ENCODE measurements at regions of chr19 and their contacts with region 1.

Region 1: GRCh38 chr19:53333463-53334449 is at the start of gene ZNF845:
- DNase-seq: peak; percentile 99
- ATAC-seq: peak; percentile 99
- H3K4me3 Mint-ChIP-seq: peak within 1 kb of the TSS; percentile 95
- H3K27ac Mint-ChIP-seq: peak within 1 kb of the TSS; percentile 91
- H3K4me1 Mint-ChIP-seq: peaks cover 30% of the 10 kb centered on the region
- H3K27me3 Mint-ChIP-seq: peaks cover 4% of the 10 kb centered on the region
- CTCF ChIP-seq: no peak
- total RNA-seq, gene ZNF845: 11.6 and 11.9 TPM in 2 replicates

Region 2: GRCh38 chr19:52296773-52297600 is 1036.8 kb before region 1 on chr19 and contains the start of gene ZNF480:
- CTCF ChIA-PET with region 1: no interaction called
- POLR2A ChIA-PET with region 1: no interaction called
- intact Hi-C with region 1: loop called (anchors 10 kb)
- DNase-seq: peak; percentile 78
- ATAC-seq: peak; percentile 80
- H3K4me3 Mint-ChIP-seq: peak within 1 kb of the TSS; percentile 98
- H3K27ac Mint-ChIP-seq: peak within 1 kb of the TSS; percentile 98
- H3K4me1 Mint-ChIP-seq: peaks cover 21% of the 10 kb centered on the region
- H3K27me3 Mint-ChIP-seq: no peaks in the 10 kb centered on the region
- CTCF ChIP-seq: no peak
- total RNA-seq, gene ZNF480: 24.0 and 25.5 TPM in 2 replicates

Region 3: DNA sequence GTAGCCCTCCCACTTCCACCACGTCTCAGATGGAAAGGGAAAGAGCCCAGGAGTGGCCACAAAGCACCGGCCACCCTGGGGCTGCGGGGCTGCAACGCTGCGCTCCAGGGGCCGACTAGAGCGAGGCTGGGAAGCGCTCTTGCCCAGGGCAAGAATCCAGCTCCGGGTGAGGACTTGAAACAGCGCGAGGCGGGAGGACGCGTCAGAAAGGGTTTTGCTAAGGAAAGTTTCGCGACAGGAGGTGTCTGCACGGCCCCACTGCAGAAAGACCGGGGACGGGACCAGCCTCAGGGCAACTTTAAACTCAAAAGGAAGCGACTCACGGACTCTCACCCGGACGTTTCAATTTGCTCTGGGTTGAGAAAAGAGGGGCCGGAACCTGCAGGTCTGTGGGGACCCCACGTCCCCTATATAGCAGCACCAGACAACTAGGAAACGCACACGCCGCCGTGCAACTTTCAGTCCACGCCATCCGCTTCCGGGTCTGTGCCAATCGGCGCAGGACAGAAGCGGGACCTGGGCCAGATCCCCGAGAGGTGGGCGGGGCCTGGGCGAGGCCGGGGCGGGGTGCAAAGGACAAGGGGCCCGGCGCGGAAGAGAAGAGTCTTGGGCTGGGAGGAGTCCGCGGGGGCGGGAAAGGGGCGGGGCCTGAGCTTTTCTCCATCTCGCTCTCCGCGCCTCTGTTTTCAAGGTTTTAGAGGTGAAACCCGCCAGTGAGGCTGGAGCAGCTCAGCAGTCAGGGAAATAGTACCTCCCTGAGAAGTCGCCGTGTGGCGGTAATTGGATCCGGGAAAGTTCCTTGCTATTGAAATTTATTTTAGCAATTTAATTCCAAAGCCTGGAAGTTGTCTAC is 371.1 kb before region 1 on chr19 and contains the start of gene ZNF816:
- CTCF ChIA-PET with region 1: no interaction called
- POLR2A ChIA-PET with region 1: interaction called, 9 read pairs
- intact Hi-C with region 1: loop called (anchors 1 kb)
- DNase-seq: peak; percentile 97
- ATAC-seq: peak; percentile 99
- H3K4me3 Mint-ChIP-seq: peak within 1 kb of the TSS; percentile 94
- H3K27ac Mint-ChIP-seq: peak within 1 kb of the TSS; percentile 92
- H3K4me1 Mint-ChIP-seq: peaks cover 31% of the 10 kb centered on the region
- H3K27me3 Mint-ChIP-seq: no peaks in the 10 kb centered on the region
- CTCF ChIP-seq: no peak
- total RNA-seq, gene ZNF816: 17.0 and 18.0 TPM in 2 replicates

Region 4: DNA sequence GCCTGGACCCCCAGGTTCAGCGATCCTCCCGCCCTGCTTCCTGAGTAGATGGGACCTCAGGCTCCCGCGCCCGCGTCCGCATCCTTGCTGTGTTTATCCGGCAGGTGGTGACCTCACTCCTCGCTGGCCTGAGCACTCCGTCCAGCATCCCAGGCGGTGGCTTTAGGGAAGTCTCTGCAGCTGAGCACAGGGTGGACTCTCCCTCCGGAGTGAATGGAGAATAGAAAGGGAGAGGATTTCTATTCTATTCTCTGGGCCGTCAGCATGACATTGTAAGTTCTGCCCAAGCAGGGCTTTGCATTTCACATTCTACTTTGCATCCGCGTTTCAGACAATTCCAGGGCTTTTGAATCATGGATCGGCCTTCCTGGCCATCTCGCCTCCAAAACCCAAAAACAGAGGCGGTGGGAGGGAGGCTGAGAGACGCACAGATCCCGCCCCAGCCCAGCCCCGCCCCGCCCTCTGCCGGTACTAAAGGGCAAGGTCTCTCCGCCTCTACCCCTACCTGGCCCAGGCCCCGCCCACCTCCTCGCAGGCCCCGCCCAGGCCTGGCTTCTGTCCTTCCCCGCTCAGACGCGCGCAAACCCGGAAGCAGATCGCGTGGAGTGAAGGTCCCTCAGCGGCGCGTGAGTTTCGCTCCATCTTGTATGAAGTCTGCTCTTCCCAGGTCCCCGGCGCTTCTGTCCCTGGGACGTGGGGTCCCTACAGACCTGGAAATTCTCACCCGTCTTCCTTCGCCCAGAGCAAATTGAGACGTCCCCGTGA is 31.6 kb after region 1 on chr19 and contains the start of gene ZNF525:
- CTCF ChIA-PET with region 1: no interaction called
- POLR2A ChIA-PET with region 1: no interaction called
- intact Hi-C with region 1: loop called (anchors 1 kb)
- DNase-seq: peak; percentile 98
- ATAC-seq: peak; percentile 99
- H3K4me3 Mint-ChIP-seq: peak within 1 kb of the TSS; percentile 96
- H3K27ac Mint-ChIP-seq: peak within 1 kb of the TSS; percentile 98
- H3K4me1 Mint-ChIP-seq: peaks cover 34% of the 10 kb centered on the region
- H3K27me3 Mint-ChIP-seq: no peaks in the 10 kb centered on the region
- CTCF ChIP-seq: no peak
- total RNA-seq, gene ZNF525: 28.9 and 37.4 TPM in 2 replicates

Region 5: GRCh38 chr19:53431399-53432087 is 97.8 kb after region 1 on chr19 and contains the start of gene ZNF761:
- CTCF ChIA-PET with region 1: no interaction called
- POLR2A ChIA-PET with region 1: no interaction called
- intact Hi-C with region 1: loop called (anchors 1 kb)
- DNase-seq: peak; percentile 99
- ATAC-seq: peak; percentile 98
- H3K4me3 Mint-ChIP-seq: peak within 1 kb of the TSS; percentile 96
- H3K27ac Mint-ChIP-seq: peak within 1 kb of the TSS; percentile 94
- H3K4me1 Mint-ChIP-seq: peaks cover 34% of the 10 kb centered on the region
- H3K27me3 Mint-ChIP-seq: no peaks in the 10 kb centered on the region
- CTCF ChIP-seq: no peak
- total RNA-seq, gene ZNF761: 11.1 and 13.8 TPM in 2 replicates

Region 6: GRCh38 chr19:53520550-53521372 is 187.0 kb after region 1 on chr19:
- CTCF ChIA-PET with region 1: no interaction called
- POLR2A ChIA-PET with region 1: interaction called, 3 read pairs
- intact Hi-C with region 1: loop called (anchors 2 kb)
- DNase-seq: peak; percentile 71
- ATAC-seq: peak; percentile 97
- H3K4me3 Mint-ChIP-seq: peak overlapping the region; percentile 94
- H3K27ac Mint-ChIP-seq: peak overlapping the region; percentile 87
- H3K4me1 Mint-ChIP-seq: peaks cover 16% of the 10 kb centered on the region
- H3K27me3 Mint-ChIP-seq: no peaks in the 10 kb centered on the region
- CTCF ChIP-seq: no peak